ENCODE measurements at regions of chr12 and their contacts with region 1.

Region 1: GRCh38 chr12:50924439-50925341 is 27.7 kb upstream of the HIGD1C start:
- DNase-seq: peak; percentile 93 to 98 (median 96)
- H3K4me3 ChIP-seq: peak overlapping the region; percentile 20 to 91 (median 74)
- H3K27ac ChIP-seq: peak overlapping the region; percentile 84 to 94 (median 88)
- H3K4me1 ChIP-seq: peaks cover 37 to 53% of the 10 kb centered on the region in 2 donors
- H3K27me3 ChIP-seq: no peaks in the 10 kb centered on the region
- CTCF ChIP-seq: no peak
- POLR2A ChIP-seq: peak in 1 of 2 donors; percentile 86

Region 2: GRCh38 chr12:50979369-50980052 is 54.8 kb after region 1 on chr12:
- intact Hi-C with region 1: loop called in 1 of 2 experiments (anchors 5 kb)
- DNase-seq: no peak
- H3K4me3 ChIP-seq: no peak overlapping the region
- H3K27ac ChIP-seq: no peak overlapping the region
- H3K4me1 ChIP-seq: peaks cover 3% of the 10 kb centered on the region in 2 donors
- H3K27me3 ChIP-seq: no peaks in the 10 kb centered on the region
- CTCF ChIP-seq: no peak
- POLR2A ChIP-seq: no peak

Region 3: GRCh38 chr12:51150777-51151176 is 226.1 kb after region 1 on chr12:
- intact Hi-C with region 1: no loop called
- DNase-seq: no peak
- H3K4me3 ChIP-seq: no peak overlapping the region
- H3K27ac ChIP-seq: no peak overlapping the region
- H3K4me1 ChIP-seq: no peaks in the 10 kb centered on the region
- H3K27me3 ChIP-seq: no peaks in the 10 kb centered on the region
- CTCF ChIP-seq: no peak
- POLR2A ChIP-seq: no peak

Measured in adrenal gland (tissue), 19 donors.